Posterior cingulate gyrus (tissue), 11 donors: ENCODE measurements at regions of chr9 and their contacts with region 1.

Region 1: GRCh38 chr9:126490871-126491567 is 122.7 kb upstream of the LMX1B start:
- DNase-seq: peak in 7 of 10 donors; percentile 51 to 89 (median 61)

Region 2: DNA sequence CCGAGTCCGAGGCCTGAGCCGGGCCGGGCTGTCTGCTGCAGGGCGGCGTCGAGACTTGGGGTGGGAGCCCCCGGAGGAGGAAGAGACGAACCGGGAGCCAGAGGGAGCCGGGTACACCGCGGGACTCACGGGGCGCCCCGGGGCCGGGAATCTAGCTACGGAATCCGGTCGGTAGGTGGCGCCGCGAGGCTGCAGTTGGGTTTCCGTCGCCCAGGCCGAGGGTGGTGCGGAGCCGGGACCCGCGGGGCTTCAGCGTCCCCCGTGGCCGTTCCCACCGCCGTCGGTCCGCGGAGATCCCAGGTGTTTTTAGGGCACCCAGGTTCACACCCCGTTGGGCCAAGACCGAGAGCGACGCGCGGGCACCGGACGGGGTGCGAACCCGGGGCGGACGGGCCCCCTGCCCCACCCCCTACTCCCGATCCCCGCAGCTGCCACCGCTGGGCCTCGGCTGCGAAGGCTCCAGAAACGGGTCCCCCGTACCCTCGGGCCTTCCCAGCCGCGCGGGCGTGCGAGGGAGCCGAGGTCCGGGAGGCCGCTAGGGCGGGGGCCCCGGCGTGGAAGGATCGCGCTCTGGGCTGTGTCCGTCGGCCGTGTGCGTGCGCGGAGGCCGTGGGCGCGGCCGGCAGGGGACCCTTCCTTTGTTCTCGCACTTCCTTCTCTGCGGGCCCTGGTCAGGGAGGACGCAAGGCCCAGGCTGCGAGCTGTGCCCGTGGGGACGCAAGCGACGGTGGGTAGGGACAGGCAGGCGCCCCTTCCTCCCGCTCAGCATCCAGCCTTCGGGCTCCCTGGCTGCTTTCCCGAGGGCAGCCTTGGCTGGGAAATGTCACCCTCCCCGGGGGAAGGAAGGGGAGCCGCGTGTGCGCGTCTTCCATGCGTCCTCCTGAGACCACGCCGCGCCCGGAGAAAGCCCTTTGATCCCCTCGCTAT is 1082.8 kb before region 1 on chr9:
- intact Hi-C with region 1: loop called (anchors 5 kb)
- DNase-seq: peak; percentile 58 to 96 (median 78)

Region 3: GRCh38 chr9:125558453-125559092 is 932.4 kb before region 1 on chr9:
- intact Hi-C with region 1: loop called (anchors 2 kb)
- DNase-seq: peak in 5 of 10 donors; percentile 56 to 92 (median 61)

Region 4: GRCh38 chr9:126290871-126291270 is 200.1 kb before region 1 on chr9:
- intact Hi-C with region 1: no loop called
- DNase-seq: no peak

Region 5: DNA sequence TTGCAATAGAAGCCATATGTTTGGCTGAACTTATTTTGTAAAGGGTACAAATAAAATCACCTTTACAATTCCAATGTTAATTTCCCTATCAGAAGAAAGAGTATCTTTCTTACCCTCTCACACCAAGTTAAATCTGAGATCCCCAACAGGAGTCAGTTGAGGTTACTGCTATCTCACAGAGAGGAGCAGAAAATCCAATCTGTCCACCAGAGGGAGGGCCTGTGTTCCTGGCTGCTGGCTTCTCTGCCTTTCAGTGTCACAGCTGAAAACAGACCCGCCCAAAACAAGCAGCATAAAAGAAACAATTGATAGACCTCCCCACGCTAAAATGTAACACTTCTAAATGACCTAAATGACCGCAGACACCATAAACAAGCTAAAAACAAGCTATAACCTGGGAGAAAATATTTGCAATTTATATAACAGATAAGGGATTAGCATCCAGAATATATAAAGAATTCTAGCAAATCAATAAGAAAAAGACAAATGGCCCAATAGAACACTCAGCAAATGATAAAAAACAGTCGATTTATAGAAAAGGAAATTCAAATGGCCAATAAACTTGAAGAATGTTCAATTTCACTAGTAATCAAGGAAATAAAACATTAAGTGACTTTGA is 188.9 kb before region 1 on chr9:
- intact Hi-C with region 1: loop called (anchors 5 kb)
- DNase-seq: peak in 7 of 10 donors; percentile 54 to 94 (median 68)

Region 6: GRCh38 chr9:126398403-126399058 is 92.5 kb before region 1 on chr9:
- intact Hi-C with region 1: loop called (anchors 1 kb)
- DNase-seq: peak; percentile 76 to 98 (median 92)

Region 7: DNA sequence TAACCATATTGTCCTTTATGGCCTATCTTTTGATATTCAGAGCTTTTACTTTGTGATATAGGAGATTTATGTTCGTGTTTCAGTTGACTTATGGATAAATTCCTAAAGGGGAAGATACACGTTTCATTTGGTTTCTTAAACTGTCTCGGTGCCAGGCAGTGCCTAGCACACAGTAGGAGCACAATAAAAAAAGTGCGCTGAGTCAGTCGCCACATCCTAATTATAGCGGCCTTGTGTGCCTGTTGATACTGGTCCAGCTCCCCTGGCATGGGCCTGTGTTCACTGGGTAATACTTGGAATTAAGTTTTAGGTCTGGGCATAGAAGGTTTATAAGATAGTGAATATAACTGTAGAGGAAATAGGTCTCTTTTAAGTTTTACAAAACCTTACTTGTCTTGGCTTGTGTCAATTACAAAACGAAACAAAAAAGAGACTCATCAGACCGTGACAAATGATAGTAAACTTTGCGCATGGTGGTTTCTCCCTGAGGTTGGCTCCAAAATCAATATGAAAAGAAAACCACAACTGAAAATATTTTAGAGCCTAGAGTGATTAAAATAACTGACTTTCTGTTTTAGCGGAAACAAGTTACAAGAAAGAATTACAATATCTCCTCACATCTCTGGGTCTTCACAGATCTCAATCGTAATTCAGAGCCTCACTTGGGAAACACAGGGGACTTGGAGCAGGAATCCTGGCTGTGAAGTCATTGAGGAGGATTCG is 79.6 kb before region 1 on chr9:
- intact Hi-C with region 1: loop called (anchors 5 kb)
- DNase-seq: no peak

Region 8: DNA sequence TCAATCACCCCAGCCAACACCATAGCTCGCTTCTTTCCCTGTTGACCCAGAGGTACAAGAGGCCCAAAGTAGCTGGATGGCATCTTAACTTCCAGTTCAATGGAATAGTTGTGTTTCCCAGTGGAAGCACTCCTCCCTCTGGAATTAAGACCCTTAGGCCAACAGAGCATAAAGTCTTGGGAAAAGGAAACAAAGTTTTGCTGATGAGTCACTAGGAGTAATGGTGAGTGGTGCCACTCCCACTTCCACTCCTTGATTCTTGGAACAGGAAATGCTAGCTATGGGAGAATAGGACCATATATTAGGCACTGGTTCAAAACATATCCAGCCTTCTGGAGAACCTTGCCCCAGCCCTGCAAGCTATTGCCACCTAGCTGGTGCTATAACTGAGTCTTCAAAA is 78.0 kb after region 1 on chr9:
- intact Hi-C with region 1: no loop called
- DNase-seq: no peak